BJ (cell line): ENCODE measurements at regions of chr1 and their contacts with region 1.

Region 1: DNA sequence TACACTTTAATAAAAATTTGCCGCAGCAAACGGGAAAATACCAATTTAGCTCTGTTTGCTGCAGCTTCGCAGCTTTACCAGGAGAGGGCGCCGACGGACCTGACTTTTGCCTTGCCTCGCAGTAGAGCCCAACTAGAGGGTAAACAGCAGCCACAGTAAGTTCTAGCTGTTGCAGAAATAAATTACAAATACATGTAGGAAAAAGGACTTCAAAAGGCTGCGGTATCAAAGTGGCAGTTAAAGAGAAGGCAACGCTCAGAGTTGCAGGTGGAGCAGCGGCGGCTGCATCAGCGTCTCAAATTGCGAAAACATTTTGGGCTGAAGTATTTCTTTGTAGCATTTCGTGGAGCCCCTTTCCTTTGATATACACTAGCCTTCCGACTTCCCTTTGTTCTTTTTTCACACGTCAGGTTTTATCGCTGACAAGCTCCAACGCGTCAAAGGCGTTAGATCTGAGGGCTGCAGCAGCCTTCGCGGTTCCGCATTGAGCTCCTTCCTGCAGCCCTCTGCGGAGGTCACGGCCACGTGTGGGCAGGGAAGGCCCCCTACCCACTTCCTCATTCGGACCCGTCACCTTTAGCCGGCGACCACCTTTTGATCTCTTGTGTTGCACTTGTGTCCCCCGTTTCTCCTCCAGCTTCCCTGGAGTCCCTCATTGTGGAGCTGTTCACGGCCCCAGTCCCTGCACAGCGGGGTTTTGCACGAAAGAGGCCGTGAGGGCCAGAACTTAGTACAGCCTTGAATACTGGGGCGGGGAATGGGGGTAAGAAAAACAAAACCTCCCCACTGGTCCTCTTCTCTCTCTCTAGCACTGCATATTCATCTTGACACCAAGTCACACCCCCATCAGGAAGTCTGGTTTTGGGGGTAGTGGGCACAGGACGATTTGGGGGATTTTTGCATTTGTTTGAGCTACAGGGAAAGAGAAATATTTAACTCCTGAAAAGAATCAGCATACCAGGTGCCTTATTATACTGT is 72.8 kb downstream of the S1PR1 start:
- DNase-seq: no peak
- H3K4me3 ChIP-seq: peak overlapping the region; percentile 23; the same call in 1 of the 2 replicates
- H3K27me3 ChIP-seq: peaks cover 22% of the 10 kb centered on the region
- CTCF ChIP-seq: peak; percentile 91

Region 2: DNA sequence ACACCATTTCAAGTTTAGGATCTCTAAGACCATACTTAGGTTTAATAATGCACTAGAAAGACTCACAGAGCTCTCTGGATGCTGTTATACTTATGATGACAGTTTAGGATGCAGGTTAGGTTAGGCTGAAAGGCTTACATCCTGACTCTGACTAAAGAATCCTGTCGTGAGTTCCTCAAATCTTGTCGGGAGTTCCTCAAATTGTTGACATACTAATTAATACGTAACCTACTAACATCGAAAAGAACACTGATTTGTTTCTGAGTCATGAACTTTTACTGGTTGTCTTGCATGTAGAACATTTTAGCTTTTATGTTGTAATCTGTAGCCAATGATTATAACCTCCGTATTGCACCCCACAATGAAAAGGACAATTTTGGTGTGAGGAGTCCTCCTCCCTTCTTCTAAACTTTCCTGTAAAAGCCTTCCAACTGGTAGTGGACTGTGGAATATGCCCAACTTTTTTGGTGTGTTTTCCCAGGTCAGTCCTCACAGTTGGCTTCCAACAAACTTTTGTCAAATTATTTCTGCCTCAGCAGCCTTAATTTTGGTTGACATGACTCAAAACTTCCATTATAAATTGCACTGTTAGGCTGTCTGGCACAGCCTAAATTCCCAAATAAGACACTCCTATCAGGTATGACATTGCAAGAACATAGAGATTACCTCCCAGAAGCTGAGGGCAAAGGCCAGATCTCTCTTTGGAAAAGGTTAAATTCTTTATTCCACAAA is 1771.6 kb before region 1 on chr1:
- CTCF ChIA-PET with region 1: no interaction called
- POLR2A ChIA-PET with region 1: interaction called, 15 read pairs
- DNase-seq: no peak
- H3K4me3 ChIP-seq: no peak overlapping the region
- H3K27me3 ChIP-seq: no peaks in the 10 kb centered on the region
- CTCF ChIP-seq: no peak

Region 3: GRCh38 chr1:101344745-101345144 is 35.1 kb after region 1 on chr1:
- CTCF ChIA-PET with region 1: interaction called, 11 read pairs
- POLR2A ChIA-PET with region 1: interaction called, 3 read pairs
- DNase-seq: no peak
- H3K4me3 ChIP-seq: no peak overlapping the region
- H3K27me3 ChIP-seq: peaks cover 6% of the 10 kb centered on the region
- CTCF ChIP-seq: no peak

Region 4: GRCh38 chr1:101357444-101357986 is 47.9 kb after region 1 on chr1:
- CTCF ChIA-PET with region 1: interaction called, 55 read pairs
- POLR2A ChIA-PET with region 1: no interaction called
- DNase-seq: peak; percentile 19
- H3K4me3 ChIP-seq: no peak overlapping the region
- H3K27me3 ChIP-seq: peaks cover 1% of the 10 kb centered on the region
- CTCF ChIP-seq: peak; percentile 86

Region 5: DNA sequence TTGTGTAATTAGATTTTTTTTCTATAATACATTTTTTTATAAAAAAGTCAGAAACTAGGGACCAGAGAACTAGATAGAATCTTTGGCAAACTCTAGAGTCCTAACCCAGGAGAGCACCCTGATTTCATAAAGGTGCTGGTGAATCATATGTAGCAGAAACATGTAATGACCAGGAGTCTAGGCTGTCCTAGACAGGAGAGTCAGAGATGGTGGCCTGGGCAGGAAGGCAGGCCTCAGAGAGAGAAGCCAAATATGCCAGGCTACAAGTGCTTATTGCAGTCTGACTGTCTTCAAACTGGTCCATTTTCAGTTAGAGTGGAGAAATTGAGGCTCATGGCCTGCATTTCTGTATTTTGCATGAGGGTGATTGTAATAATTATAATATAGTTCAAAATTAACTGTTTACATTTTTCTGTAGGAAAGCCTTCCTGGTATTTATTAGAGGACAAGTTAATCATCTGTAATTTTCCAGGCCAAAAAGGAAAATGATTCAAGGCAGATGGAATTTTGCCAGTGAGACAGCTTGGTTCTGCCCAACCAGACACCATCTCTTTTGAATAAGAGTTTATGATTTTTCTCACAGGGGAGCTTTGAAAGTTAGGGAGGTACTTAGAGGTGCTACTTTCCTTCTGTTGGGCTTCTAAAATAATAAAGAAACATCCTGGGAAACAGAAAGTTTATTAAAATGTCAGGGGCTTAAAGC is 57.0 kb after region 1 on chr1:
- CTCF ChIA-PET with region 1: interaction called, 12 read pairs
- POLR2A ChIA-PET with region 1: no interaction called
- DNase-seq: peak; percentile 6
- H3K4me3 ChIP-seq: no peak overlapping the region
- H3K27me3 ChIP-seq: no peaks in the 10 kb centered on the region
- CTCF ChIP-seq: no peak

Region 6: GRCh38 chr1:101438359-101438758 is 128.7 kb after region 1 on chr1:
- CTCF ChIA-PET with region 1: interaction called, 10 read pairs
- POLR2A ChIA-PET with region 1: no interaction called
- DNase-seq: no peak
- H3K4me3 ChIP-seq: no peak overlapping the region
- H3K27me3 ChIP-seq: no peaks in the 10 kb centered on the region; the same call in 1 of the 2 replicates
- CTCF ChIP-seq: peak; percentile 33; the same call in 1 of the 2 replicates